Heart left ventricle (tissue), 16 donors: ENCODE measurements at regions of chr19 and their contacts with region 1.

Region 1: GRCh38 chr19:54029930-54030490 is 33.7 kb downstream of the VSTM1 start:
- DNase-seq: peak in 3 of 5 donors; percentile 25 to 55 (median 50)
- ATAC-seq: peak in 1 of 4 donors; percentile 44
- H3K4me3 ChIP-seq: no peak overlapping the region
- H3K27ac ChIP-seq: no peak overlapping the region
- H3K4me1 ChIP-seq: peaks cover 0 to 6% (median 0%) of the 10 kb centered on the region in 12 donors
- H3K27me3 ChIP-seq: peaks cover 0 to 31% (median 4%) of the 10 kb centered on the region in 9 donors
- CTCF ChIP-seq: peak; percentile 25 to 59 (median 52)
- POLR2A ChIP-seq: no peak

Region 2: GRCh38 chr19:53792721-53793433 is 237.1 kb before region 1 on chr19:
- intact Hi-C with region 1: loop called in 3 of 10 experiments (anchors 5 to 10 kb)
- DNase-seq: peak; percentile 77 to 90 (median 85)
- ATAC-seq: peak; percentile 96 to 99 (median 97)
- H3K4me3 ChIP-seq: no peak overlapping the region
- H3K27ac ChIP-seq: no peak overlapping the region
- H3K4me1 ChIP-seq: no peaks in the 10 kb centered on the region
- H3K27me3 ChIP-seq: no peaks in the 10 kb centered on the region
- CTCF ChIP-seq: peak; percentile 94 to 100 (median 99)
- POLR2A ChIP-seq: no peak

Region 3: DNA sequence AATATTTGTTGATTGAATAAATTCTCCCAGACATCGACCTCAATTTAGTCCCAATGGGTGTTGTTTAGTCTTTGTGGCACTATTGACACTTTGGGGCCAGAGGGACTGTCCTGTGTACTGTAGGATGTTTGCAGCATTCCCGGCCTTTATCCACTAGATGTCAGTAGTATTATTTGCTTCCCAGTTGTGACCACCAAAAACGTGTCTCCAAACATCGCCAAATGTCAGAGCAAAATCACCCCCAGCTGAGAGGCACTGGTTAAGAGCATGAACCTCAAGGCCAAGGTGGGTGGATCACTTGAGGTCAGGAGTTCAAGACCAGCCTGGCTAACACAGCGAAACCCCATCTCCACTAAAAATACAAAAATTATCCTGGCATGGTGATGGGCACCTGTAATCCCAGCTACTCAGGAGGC is 221.3 kb before region 1 on chr19:
- intact Hi-C with region 1: loop called in 6 of 10 experiments (anchors 2 to 10 kb)
- DNase-seq: no peak
- ATAC-seq: peak in 2 of 4 donors; percentile 15 to 59
- H3K4me3 ChIP-seq: no peak overlapping the region
- H3K27ac ChIP-seq: no peak overlapping the region
- H3K4me1 ChIP-seq: peaks cover 0 to 4% (median 0%) of the 10 kb centered on the region in 12 donors
- H3K27me3 ChIP-seq: peaks cover 0 to 5% (median 0%) of the 10 kb centered on the region in 9 donors
- CTCF ChIP-seq: peak; percentile 16 to 65 (median 42)
- POLR2A ChIP-seq: no peak

Region 4: GRCh38 chr19:53844849-53845246 is 185.2 kb before region 1 on chr19:
- intact Hi-C with region 1: loop called in 3 of 10 experiments (anchors 2 kb)
- DNase-seq: no peak
- ATAC-seq: no peak
- H3K4me3 ChIP-seq: no peak overlapping the region
- H3K27ac ChIP-seq: no peak overlapping the region
- H3K4me1 ChIP-seq: peaks cover 0 to 49% (median 7%) of the 10 kb centered on the region in 12 donors
- H3K27me3 ChIP-seq: no peaks in the 10 kb centered on the region
- CTCF ChIP-seq: no peak
- POLR2A ChIP-seq: no peak

Region 5: GRCh38 chr19:53971673-53972072 is 58.3 kb before region 1 on chr19:
- intact Hi-C with region 1: no loop called
- DNase-seq: no peak
- ATAC-seq: no peak
- H3K4me3 ChIP-seq: no peak overlapping the region
- H3K27ac ChIP-seq: no peak overlapping the region
- H3K4me1 ChIP-seq: no peaks in the 10 kb centered on the region
- H3K27me3 ChIP-seq: peaks cover 0 to 29% (median 0%) of the 10 kb centered on the region in 9 donors
- CTCF ChIP-seq: no peak
- POLR2A ChIP-seq: no peak